Panc1 (cell line): ENCODE measurements at regions of chr1 and their contacts with region 1.

Region 1: DNA sequence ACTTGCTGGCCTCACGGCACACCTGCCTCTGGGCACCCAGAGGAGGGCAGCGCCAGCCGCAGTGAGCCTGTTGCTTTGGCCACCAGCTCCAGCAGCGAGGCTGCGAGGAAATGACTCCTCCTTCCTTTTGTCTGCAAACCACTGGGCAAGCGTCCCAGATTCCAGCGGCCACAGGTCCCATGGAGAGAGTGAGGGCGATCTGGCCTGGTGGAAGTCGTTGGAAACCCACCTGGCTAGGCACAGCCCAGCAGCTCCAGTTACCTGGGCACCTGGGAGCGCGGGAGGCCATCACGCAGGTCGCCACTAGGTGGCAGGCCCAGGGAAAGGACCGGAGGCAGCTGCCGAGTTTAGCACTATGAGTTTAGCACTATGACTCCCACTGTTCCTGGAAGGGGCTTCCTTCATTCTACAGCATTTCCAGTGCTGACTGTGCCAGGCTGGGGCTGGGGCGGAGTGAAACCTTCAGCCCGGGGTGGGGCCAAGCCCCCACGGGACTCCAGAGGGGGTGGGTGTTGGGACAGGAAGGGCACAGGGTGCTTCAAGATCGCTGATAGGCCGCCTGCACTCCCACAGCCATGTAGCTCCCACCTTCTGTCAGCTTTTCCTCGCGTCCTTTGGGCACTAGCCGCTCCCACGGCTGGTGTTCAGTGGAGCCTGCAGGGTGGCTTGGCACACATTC is 1.1 kb upstream of the ESPN start:
- DNase-seq: no peak
- ATAC-seq: peak; percentile 55
- H3K4me3 ChIP-seq: peak overlapping the region; percentile 45 to 68
- H3K27ac ChIP-seq: no peak overlapping the region
- H3K4me1 ChIP-seq: peaks cover 22% of the 10 kb centered on the region
- H3K27me3 ChIP-seq: no peaks in the 10 kb centered on the region
- CTCF ChIP-seq: peak; percentile 95

Region 2: GRCh38 chr1:6294615-6295556 is 128.6 kb before region 1 on chr1:
- CTCF ChIA-PET with region 1: no interaction called
- POLR2A ChIA-PET with region 1: no interaction called
- in situ Hi-C with region 1: no loop called
- intact Hi-C with region 1: no loop called
- DNase-seq: no peak
- ATAC-seq: no peak
- H3K4me3 ChIP-seq: no peak overlapping the region
- H3K27ac ChIP-seq: no peak overlapping the region
- H3K4me1 ChIP-seq: no peaks in the 10 kb centered on the region
- H3K27me3 ChIP-seq: no peaks in the 10 kb centered on the region
- CTCF ChIP-seq: no peak

Region 3: DNA sequence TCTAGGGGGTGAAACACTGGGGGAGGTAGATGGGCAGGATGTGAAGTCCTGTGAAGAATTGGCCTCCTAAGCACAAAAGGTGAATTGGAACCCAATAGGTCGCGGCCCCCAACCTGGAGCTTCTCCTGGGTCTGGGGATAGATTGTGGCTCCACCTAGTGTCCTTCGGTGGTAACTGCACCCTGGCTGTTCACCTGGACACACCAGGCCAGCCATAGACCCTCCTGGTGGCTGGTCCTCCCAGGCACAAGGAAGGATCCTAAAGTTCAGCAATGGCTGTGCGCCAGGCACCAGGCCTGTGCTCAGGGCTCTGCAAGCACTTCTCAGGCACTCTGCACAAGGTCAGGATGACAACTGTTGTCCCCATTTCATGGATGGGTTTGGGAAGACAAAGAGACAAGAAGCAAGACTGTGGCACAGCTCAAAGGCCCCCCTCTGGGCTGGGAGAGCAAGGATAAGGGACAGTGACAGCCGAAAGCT is 14.6 kb after region 1 on chr1:
- CTCF ChIA-PET with region 1: interaction called, 35 read pairs
- POLR2A ChIA-PET with region 1: no interaction called
- in situ Hi-C with region 1: no loop called
- intact Hi-C with region 1: no loop called
- DNase-seq: no peak
- ATAC-seq: peak; percentile 80
- H3K4me3 ChIP-seq: no peak overlapping the region
- H3K27ac ChIP-seq: no peak overlapping the region
- H3K4me1 ChIP-seq: peaks cover 14% of the 10 kb centered on the region
- H3K27me3 ChIP-seq: no peaks in the 10 kb centered on the region
- CTCF ChIP-seq: peak; percentile 97

Region 4: GRCh38 chr1:6832531-6833188 is 409.2 kb after region 1 on chr1:
- CTCF ChIA-PET with region 1: no interaction called
- POLR2A ChIA-PET with region 1: no interaction called
- in situ Hi-C with region 1: no loop called
- intact Hi-C with region 1: no loop called
- DNase-seq: no peak
- ATAC-seq: no peak
- H3K4me3 ChIP-seq: no peak overlapping the region
- H3K27ac ChIP-seq: no peak overlapping the region
- H3K4me1 ChIP-seq: no peaks in the 10 kb centered on the region
- H3K27me3 ChIP-seq: no peaks in the 10 kb centered on the region
- CTCF ChIP-seq: no peak